ENCODE measurements at regions of chr3 and their contacts with region 1.

Region 1: DNA sequence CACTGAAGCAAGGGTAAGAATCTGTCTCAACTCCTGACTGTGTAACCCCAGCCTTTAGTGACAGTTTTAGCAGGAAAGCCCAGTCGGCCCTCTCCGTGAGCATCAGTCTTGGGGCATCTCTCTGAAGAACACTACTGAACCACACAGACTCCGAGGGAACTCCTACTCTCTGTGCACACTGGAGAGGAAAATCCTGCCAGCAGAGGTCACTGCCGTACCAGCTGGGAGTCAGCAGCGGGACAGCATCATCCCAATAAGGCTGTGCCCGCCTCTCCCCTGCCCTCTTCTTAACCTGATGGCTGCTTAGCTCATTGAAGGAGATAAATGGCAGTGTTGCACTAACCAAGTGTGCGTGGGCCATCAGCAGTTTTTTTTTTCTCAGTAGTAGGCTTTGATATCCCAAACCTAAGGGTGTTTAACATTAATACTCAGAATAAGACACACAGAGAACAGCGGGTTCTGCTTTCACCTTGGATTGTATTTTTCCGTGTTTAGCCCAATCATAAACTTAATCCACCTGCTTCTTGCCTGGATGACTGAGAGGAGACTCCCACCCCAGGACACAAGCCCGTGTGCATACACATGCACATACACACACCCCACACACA is 26.6 kb upstream of the RASA2 start:
- DNase-seq: peak; percentile 93
- ATAC-seq: peak; percentile 100
- H3K4me3 Mint-ChIP-seq: no peak overlapping the region
- H3K27ac Mint-ChIP-seq: no peak overlapping the region
- H3K4me1 Mint-ChIP-seq: peaks cover 20% of the 10 kb centered on the region
- H3K27me3 Mint-ChIP-seq: no peaks in the 10 kb centered on the region

Region 2: DNA sequence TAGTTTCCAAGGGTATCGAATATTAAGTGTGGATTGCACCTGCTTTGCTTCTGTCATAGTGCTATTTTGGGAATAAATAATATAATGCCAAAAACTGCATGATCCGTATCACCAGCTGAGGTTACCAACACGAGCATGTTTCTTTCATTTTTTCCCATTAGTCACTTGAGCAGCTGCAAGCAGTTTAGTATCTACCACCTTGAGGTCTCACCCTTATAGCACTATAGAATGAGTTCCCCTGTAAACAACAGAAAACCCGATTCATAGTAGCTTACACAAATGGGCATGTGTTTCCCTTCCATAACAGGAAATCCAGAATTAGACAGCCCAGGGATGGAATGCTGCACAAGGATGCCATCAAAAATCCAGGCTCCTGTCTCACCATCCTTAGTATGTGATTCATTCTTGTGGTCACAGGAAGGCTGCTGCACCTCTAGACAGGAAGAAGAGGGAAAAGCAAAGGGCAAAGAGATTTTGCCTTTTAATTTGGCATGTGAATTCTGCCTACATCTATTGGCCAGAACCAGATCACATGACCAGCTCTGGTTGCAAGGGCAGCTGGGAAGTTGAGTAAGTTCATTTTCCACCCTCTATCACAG is 609.9 kb before region 1 on chr3:
- CTCF ChIA-PET with region 1: no interaction called
- POLR2A ChIA-PET with region 1: no interaction called
- DNase-seq: no peak
- ATAC-seq: no peak
- H3K4me3 Mint-ChIP-seq: no peak overlapping the region
- H3K27ac Mint-ChIP-seq: no peak overlapping the region
- H3K4me1 Mint-ChIP-seq: peaks cover 8% of the 10 kb centered on the region
- H3K27me3 Mint-ChIP-seq: peaks cover 13% of the 10 kb centered on the region

Region 3: GRCh38 chr3:141243271-141243707 is 216.9 kb before region 1 on chr3:
- CTCF ChIA-PET with region 1: no interaction called
- POLR2A ChIA-PET with region 1: no interaction called
- DNase-seq: peak; percentile 84
- ATAC-seq: peak; percentile 98
- H3K4me3 Mint-ChIP-seq: peak overlapping the region; percentile 54
- H3K27ac Mint-ChIP-seq: peak overlapping the region; percentile 78
- H3K4me1 Mint-ChIP-seq: peaks cover 51% of the 10 kb centered on the region
- H3K27me3 Mint-ChIP-seq: no peaks in the 10 kb centered on the region

Region 4: DNA sequence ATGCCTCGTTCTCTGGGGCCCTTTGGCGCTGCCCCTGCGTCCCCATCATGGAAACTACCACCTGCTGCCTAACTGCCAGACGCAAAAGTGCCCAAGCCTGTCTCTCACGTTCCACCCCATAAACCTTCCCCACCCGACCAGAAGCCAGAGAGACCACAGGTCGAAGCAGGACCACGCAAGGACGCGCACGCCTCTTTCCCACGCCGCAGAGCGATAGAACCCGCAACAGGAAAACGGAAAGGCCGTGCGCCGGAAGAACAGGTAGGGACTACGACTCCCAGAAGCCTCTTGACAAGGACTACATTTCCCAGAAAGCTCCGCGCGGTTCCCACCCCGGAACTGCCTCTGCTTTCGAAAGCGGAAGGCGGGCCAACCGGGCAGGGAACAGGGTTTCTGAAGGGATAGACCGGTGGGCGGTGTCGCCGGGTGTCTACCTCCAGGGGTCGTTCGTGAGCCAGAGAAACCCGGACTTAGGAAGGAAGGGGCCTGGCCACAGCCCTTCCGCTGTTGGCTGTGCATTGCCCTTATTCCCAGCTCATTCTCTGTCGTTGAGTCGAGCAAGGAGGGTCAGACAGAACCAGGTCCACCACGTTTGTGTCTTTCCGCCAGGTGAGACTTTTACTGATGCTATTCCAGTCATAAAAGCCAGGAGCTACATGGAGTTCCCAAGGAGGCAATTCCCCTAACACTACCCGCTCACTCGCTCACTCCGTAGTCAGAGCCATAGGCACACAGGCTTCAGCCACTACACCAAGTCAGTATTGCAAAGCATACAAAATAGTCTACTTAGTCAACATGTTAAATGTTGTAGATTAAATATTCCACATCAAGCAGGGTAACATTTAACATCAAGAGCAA is 148.5 kb before region 1 on chr3:
- CTCF ChIA-PET with region 1: interaction called, 267 read pairs
- POLR2A ChIA-PET with region 1: no interaction called
- DNase-seq: peak; percentile 100
- ATAC-seq: peak; percentile 95
- H3K4me3 Mint-ChIP-seq: peak overlapping the region; percentile 85
- H3K27ac Mint-ChIP-seq: peak overlapping the region; percentile 99
- H3K4me1 Mint-ChIP-seq: peaks cover 57% of the 10 kb centered on the region
- H3K27me3 Mint-ChIP-seq: no peaks in the 10 kb centered on the region

Region 5: GRCh38 chr3:141471160-141471559 is 11.0 kb after region 1 on chr3:
- CTCF ChIA-PET with region 1: interaction called, 28 read pairs
- POLR2A ChIA-PET with region 1: no interaction called
- DNase-seq: no peak
- ATAC-seq: no peak
- H3K4me3 Mint-ChIP-seq: no peak overlapping the region
- H3K27ac Mint-ChIP-seq: no peak overlapping the region
- H3K4me1 Mint-ChIP-seq: peaks cover 19% of the 10 kb centered on the region
- H3K27me3 Mint-ChIP-seq: peaks cover 11% of the 10 kb centered on the region

Region 6: GRCh38 chr3:141553055-141553454 is 92.9 kb after region 1 on chr3:
- CTCF ChIA-PET with region 1: interaction called, 147 read pairs
- POLR2A ChIA-PET with region 1: interaction called, 3 read pairs
- DNase-seq: peak; percentile 60
- ATAC-seq: peak; percentile 86
- H3K4me3 Mint-ChIP-seq: peak overlapping the region; percentile 55
- H3K27ac Mint-ChIP-seq: peak overlapping the region; percentile 89
- H3K4me1 Mint-ChIP-seq: peaks cover 49% of the 10 kb centered on the region
- H3K27me3 Mint-ChIP-seq: no peaks in the 10 kb centered on the region

Region 7: DNA sequence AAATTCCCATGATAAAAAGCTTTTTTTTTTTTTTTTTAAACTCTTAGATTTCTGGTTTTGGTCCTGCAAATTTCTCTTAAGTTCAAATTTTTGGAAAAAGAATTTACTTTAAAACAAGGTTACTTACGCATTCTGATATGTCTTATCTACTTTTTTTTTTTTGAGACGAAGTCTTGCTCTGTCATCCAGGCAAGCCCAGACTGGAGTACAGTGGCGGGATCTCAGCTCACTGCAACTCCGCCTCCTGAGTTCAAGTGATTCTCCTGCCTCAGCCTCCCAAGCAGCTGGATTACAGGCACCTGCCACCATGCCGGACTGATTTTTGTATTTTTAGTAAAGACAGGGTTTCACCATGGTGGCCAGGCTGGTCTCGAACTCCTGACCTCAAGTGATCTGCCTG is 109.9 kb after region 1 on chr3:
- CTCF ChIA-PET with region 1: interaction called, 12 read pairs
- POLR2A ChIA-PET with region 1: no interaction called
- DNase-seq: no peak
- ATAC-seq: no peak
- H3K4me3 Mint-ChIP-seq: no peak overlapping the region
- H3K27ac Mint-ChIP-seq: no peak overlapping the region
- H3K4me1 Mint-ChIP-seq: peaks cover 6% of the 10 kb centered on the region
- H3K27me3 Mint-ChIP-seq: no peaks in the 10 kb centered on the region

Measured in activated CD8-positive, alpha-beta T cell treated with anti-CD3 and anti-CD28 coated beads, Interleukin-2, amount 10 ng/mL, durations not matched to agents 7 days and 5 days (primary cell).